ENCODE measurements at regions of chr10 and their contacts with region 1.

Region 1: DNA sequence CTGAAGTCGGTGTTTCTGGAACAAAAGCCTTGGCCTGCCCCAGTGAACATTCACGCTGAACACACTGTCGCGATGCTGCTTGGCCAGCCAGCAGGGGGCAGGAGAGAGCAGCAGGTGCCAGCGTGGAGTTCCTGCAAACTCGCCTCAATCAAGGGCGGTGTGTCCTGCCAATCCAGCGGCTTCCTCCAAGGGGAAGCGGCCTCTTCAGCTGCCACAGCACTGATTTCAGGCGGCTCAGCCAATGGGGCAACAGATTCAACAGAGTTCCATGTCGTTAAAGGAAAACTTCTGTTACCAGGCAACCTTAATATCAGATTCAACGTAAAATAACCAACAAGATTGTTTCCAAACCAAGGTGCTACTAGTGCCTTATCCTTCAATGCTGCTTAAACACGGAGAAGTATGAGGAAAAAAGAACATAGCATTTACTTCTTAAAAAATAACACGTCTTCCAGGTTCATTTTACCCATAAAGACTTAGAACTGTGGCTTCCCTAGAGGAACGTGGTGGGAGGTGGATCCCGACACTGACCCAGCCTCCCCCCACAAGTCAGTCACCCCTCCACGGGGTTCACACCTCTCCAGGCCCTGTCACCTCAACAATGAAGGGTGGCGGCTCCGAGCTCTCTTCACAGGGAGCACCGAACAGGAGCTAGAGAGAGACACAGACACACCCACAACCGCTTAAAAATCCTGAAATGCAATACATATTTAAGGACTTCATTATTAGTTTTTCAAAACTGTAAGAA is 178.2 kb downstream of the DIP2C start:
- DNase-seq: peak; percentile 82
- ATAC-seq: peak; percentile 98
- H3K4me3 ChIP-seq: no peak overlapping the region
- H3K27ac ChIP-seq: no peak overlapping the region
- H3K4me1 ChIP-seq: 0 out of 2 replicates have a peak, but pooled peaks cover 4% of the 10 kb centered on the region
- H3K27me3 ChIP-seq: no peaks in the 10 kb centered on the region
- CTCF ChIP-seq: peak; percentile 79

Region 2: DNA sequence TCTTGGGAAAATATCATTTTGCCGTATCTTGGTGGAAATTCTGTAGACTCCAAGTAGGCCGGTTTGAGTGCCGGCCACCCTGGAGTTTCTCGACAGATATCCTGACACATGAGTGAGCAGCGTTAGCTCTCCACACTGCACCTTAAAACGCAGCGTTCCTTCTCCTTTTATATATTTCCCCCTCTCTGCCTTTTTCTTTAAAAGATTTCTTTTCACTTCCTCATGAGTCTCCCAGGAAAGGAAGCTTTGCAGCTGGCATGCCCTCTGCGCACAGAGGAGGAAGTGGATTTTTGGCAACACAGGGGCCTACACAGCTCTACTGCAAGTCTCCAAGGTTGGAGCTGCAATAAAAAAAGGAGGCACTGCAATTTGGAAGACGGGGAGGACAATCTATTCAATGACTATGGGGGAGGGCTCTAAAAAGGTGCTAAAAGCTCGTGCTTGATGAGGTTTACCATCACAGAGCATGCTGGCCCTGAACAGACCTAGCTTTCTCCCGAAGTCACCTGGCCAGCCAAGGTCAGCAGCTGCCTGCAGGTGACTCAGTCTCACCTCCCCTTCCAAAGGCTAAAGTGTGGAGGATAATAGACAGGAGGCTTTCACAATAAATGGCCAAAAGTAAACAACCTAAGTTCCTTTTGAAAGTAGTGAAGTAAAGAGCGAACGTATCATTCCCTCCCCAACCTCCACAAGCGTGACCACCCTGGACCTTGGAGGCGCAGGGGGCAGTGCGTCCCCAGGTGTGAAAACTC is 123.2 kb before region 1 on chr10:
- CTCF ChIA-PET with region 1: no interaction called
- POLR2A ChIA-PET with region 1: no interaction called
- intact Hi-C with region 1: no loop called
- DNase-seq: no peak
- ATAC-seq: no peak
- H3K4me3 ChIP-seq: no peak overlapping the region
- H3K27ac ChIP-seq: no peak overlapping the region
- H3K4me1 ChIP-seq: no peaks in the 10 kb centered on the region
- H3K27me3 ChIP-seq: no peaks in the 10 kb centered on the region
- CTCF ChIP-seq: no peak

Region 3: GRCh38 chr10:580778-581177 is 69.5 kb after region 1 on chr10:
- CTCF ChIA-PET with region 1: no interaction called
- POLR2A ChIA-PET with region 1: no interaction called
- intact Hi-C with region 1: loop called (anchors 2 kb)
- DNase-seq: peak; percentile 67
- ATAC-seq: peak; percentile 94
- H3K4me3 ChIP-seq: no peak overlapping the region
- H3K27ac ChIP-seq: peak overlapping the region; percentile 59
- H3K4me1 ChIP-seq: peaks cover 8% of the 10 kb centered on the region
- H3K27me3 ChIP-seq: no peaks in the 10 kb centered on the region
- CTCF ChIP-seq: no peak

Region 4: DNA sequence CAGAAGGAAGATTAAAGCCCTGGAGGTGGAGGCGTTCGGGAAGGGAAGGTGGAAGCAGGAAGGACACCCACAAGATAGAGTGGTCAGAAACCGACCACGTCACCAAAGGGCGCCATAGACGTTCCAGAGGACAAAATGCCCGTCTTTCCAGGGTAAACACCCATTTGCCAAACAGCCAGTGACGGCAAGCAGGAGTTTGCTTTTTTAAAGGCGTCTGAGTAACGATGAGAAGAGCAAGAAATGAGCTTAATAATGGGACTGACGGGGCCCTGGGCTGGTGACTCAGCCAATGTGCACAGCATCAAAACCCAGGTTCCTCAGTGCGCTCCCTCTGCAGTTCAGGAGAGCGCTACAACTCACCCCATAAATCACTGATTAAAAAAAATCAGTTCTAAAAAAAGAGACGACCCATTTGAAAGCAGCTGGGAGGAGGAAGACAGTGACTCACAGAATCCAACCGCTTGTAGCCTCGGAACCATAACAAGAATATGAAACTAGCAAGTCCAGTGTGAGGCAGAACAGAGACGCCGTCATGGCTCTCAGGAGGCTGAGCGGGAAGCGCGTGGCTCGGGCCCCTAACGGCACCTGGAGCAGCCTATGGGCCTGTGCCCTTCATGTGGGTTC is 172.3 kb after region 1 on chr10:
- CTCF ChIA-PET with region 1: no interaction called
- POLR2A ChIA-PET with region 1: no interaction called
- intact Hi-C with region 1: loop called (anchors 5 kb)
- DNase-seq: peak; percentile 79
- ATAC-seq: peak; percentile 92
- H3K4me3 ChIP-seq: peak overlapping the region; percentile 62
- H3K27ac ChIP-seq: peak overlapping the region; percentile 90
- H3K4me1 ChIP-seq: peaks cover 17% of the 10 kb centered on the region
- H3K27me3 ChIP-seq: no peaks in the 10 kb centered on the region
- CTCF ChIP-seq: peak; percentile 27

Measured in PC-3 (cell line).